CD4-positive, alpha-beta memory T cell (primary cell): ENCODE measurements at regions of chrX and their contacts with region 1.

Region 1: GRCh38 chrX:119004920-119005524 is 30.6 kb downstream of the LONRF3 start:
- DNase-seq: peak; percentile 27 to 41 (median 39)
- H3K4me3 ChIP-seq: no peak overlapping the region
- H3K4me3 Mint-ChIP-seq: no peak overlapping the region
- H3K27ac ChIP-seq: no peak overlapping the region
- H3K27ac Mint-ChIP-seq: peak overlapping the region in 1 of 7 donors; percentile 57
- H3K4me1 ChIP-seq: no peaks in the 10 kb centered on the region
- H3K4me1 Mint-ChIP-seq: peaks cover 4 to 34% (median 21%) of the 10 kb centered on the region in 4 donors
- H3K27me3 ChIP-seq: no peaks in the 10 kb centered on the region
- H3K27me3 Mint-ChIP-seq: no peaks in the 10 kb centered on the region

Region 2: GRCh38 chrX:118893923-118894322 is 111.1 kb before region 1 on chrX:
- CTCF ChIA-PET with region 1: no interaction called
- POLR2A ChIA-PET with region 1: no interaction called
- intact Hi-C with region 1: no loop called
- DNase-seq: no peak
- H3K4me3 ChIP-seq: no peak overlapping the region
- H3K4me3 Mint-ChIP-seq: no peak overlapping the region
- H3K27ac ChIP-seq: no peak overlapping the region
- H3K27ac Mint-ChIP-seq: no peak overlapping the region
- H3K4me1 ChIP-seq: no peaks in the 10 kb centered on the region
- H3K4me1 Mint-ChIP-seq: no peaks in the 10 kb centered on the region
- H3K27me3 ChIP-seq: no peaks in the 10 kb centered on the region
- H3K27me3 Mint-ChIP-seq: no peaks in the 10 kb centered on the region

Region 3: DNA sequence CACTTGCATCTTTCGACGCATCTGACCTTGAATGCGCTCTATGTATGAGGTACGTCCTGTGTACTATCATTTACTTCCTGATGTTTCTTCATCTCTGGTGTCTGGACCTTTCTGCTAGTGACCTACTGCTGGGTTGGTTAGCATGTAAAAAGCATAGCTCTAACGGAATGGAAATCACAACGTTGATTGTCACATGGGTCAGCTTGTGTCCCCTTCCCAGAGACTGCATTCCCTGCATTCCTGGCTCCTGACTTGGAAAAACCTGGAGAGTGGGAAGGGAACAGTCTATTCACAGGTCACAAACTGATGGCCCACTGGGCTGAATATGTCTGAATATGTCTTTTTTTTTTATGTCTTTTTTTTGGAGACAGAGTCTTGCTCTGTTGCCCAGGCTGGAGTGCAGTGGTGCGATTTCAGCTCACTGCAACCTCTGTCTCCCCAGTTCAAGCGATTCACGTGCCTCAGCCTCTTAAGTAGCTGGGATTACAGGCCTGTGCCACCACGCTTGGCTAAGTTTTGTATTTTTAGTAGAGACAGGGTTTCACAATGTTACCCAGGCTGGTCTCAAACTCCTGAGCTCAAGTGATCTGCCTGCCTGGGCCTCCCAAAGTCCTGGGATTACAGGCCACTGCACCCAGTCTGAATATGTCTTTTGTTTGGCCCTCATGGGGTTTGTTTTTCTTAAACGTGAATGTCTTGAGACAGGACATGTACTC is 14.4 kb before region 1 on chrX:
- CTCF ChIA-PET with region 1: interaction called, 20 read pairs
- POLR2A ChIA-PET with region 1: no interaction called
- intact Hi-C with region 1: no loop called
- DNase-seq: no peak
- H3K4me3 ChIP-seq: no peak overlapping the region
- H3K4me3 Mint-ChIP-seq: no peak overlapping the region
- H3K27ac ChIP-seq: no peak overlapping the region
- H3K27ac Mint-ChIP-seq: peak overlapping the region in 4 of 7 donors; percentile 21 to 86 (median 76)
- H3K4me1 ChIP-seq: peaks cover 15% of the 10 kb centered on the region
- H3K4me1 Mint-ChIP-seq: peaks cover 17 to 38% (median 28%) of the 10 kb centered on the region in 4 donors
- H3K27me3 ChIP-seq: no peaks in the 10 kb centered on the region
- H3K27me3 Mint-ChIP-seq: no peaks in the 10 kb centered on the region

Region 4: DNA sequence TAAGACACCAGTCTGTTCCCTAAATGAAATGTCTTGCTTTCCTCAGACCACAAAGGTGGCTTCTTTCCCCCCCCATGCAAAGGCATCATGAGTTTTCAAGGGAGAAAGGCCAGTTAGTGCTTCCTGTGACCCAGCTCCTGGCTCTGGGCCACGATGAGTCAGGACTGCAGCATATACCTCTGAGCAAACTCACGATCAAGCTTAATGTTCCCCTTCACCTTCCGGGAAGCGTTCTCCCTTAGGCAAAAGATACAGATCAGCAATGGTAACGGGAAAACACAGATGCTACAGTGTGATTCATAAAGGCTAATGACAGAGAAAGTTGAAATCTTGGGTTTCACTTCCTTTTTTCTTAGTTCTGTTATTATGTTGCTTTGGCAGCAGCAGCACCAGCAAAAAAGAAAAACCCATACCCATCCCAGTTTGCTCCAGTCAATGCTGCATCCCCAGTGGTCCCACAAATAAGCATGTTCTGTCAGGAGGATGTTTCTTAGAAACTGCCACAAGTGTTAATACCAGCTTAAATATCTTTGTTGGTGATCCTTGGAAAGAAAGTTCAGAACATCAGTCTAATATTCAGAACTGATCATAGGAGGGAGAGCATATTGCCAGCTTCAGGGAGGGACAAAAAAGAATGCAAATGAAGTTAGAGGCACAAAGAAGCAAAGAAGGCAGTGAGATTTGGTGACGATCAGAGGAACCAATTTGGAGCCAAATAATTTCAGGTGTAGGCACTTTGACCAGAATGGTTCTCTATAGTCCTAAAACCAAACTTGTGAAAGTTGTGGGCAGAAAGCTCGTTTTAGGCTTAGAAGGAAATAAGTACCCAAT is 10.6 kb after region 1 on chrX:
- CTCF ChIA-PET with region 1: interaction called, 12 read pairs
- POLR2A ChIA-PET with region 1: no interaction called
- intact Hi-C with region 1: no loop called
- DNase-seq: no peak
- H3K4me3 ChIP-seq: no peak overlapping the region
- H3K4me3 Mint-ChIP-seq: no peak overlapping the region
- H3K27ac ChIP-seq: no peak overlapping the region
- H3K27ac Mint-ChIP-seq: no peak overlapping the region
- H3K4me1 ChIP-seq: no peaks in the 10 kb centered on the region
- H3K4me1 Mint-ChIP-seq: peaks cover 0 to 2% (median 0%) of the 10 kb centered on the region in 4 donors
- H3K27me3 ChIP-seq: no peaks in the 10 kb centered on the region
- H3K27me3 Mint-ChIP-seq: no peaks in the 10 kb centered on the region